HepG2 (cell line): ENCODE measurements at regions of chr9 and their contacts with region 1.

Region 1: GRCh38 chr9:21110708-21111576 is 30.7 kb downstream of the IFNW1 start:
- DNase-seq: peak; percentile 61
- ATAC-seq: peak; percentile 98
- H3K4me3 ChIP-seq: no peak overlapping the region
- H3K27ac ChIP-seq: no peak overlapping the region
- H3K4me1 ChIP-seq: no peaks in the 10 kb centered on the region
- H3K27me3 ChIP-seq: no peaks in the 10 kb centered on the region
- CTCF ChIP-seq: peak; percentile 85
- EP300 ChIP-seq: no peak
- POLR2A ChIP-seq: no peak
- RAD21 ChIP-seq: no peak

Region 2: GRCh38 chr9:19471737-19472648 is 1638.9 kb before region 1 on chr9:
- CTCF ChIA-PET with region 1: no interaction called
- POLR2A ChIA-PET with region 1: no interaction called
- in situ Hi-C with region 1: loop called (anchors 25 kb)
- intact Hi-C with region 1: loop called (anchors 5 kb)
- DNase-seq: peak; percentile 41
- ATAC-seq: peak; percentile 96
- H3K4me3 ChIP-seq: peak overlapping the region in 1 of 3 experiments; percentile 49; a peak in 2 of 6 replicates
- H3K27ac ChIP-seq: no peak overlapping the region
- H3K4me1 ChIP-seq: no peaks in the 10 kb centered on the region
- H3K27me3 ChIP-seq: peaks cover 0 to 8% of the 10 kb centered on the region in 2 experiments; a peak in 1 of 5 replicates
- CTCF ChIP-seq: peak; percentile 91
- EP300 ChIP-seq: no peak
- POLR2A ChIP-seq: no peak
- RAD21 ChIP-seq: peak; percentile 64

Region 3: GRCh38 chr9:19493174-19493811 is 1617.6 kb before region 1 on chr9:
- CTCF ChIA-PET with region 1: no interaction called
- POLR2A ChIA-PET with region 1: no interaction called
- in situ Hi-C with region 1: loop called (anchors 25 kb)
- intact Hi-C with region 1: loop called (anchors 5 kb)
- DNase-seq: peak; percentile 15
- ATAC-seq: peak; percentile 86
- H3K4me3 ChIP-seq: no peak overlapping the region
- H3K27ac ChIP-seq: no peak overlapping the region
- H3K4me1 ChIP-seq: no peaks in the 10 kb centered on the region
- H3K27me3 ChIP-seq: peaks cover 2 to 14% of the 10 kb centered on the region in 2 experiments; a peak in 2 of 5 replicates
- CTCF ChIP-seq: peak; percentile 82
- EP300 ChIP-seq: no peak
- POLR2A ChIP-seq: no peak
- RAD21 ChIP-seq: peak; percentile 58; the same call in 1 of the 2 replicates

Region 4: GRCh38 chr9:20356403-20357035 is 754.4 kb before region 1 on chr9:
- CTCF ChIA-PET with region 1: interaction called, 13 read pairs
- POLR2A ChIA-PET with region 1: no interaction called
- in situ Hi-C with region 1: loop called (anchors 25 kb)
- intact Hi-C with region 1: loop called (anchors 2 kb)
- DNase-seq: peak; percentile 64
- ATAC-seq: peak; percentile 96
- H3K4me3 ChIP-seq: no peak overlapping the region; a peak in 2 of 6 replicates
- H3K27ac ChIP-seq: peak overlapping the region; percentile 6
- H3K4me1 ChIP-seq: peaks cover 18% of the 10 kb centered on the region
- H3K27me3 ChIP-seq: no peaks in the 10 kb centered on the region
- CTCF ChIP-seq: peak; percentile 85
- EP300 ChIP-seq: no peak
- POLR2A ChIP-seq: no peak
- RAD21 ChIP-seq: peak; percentile 69

Region 5: DNA sequence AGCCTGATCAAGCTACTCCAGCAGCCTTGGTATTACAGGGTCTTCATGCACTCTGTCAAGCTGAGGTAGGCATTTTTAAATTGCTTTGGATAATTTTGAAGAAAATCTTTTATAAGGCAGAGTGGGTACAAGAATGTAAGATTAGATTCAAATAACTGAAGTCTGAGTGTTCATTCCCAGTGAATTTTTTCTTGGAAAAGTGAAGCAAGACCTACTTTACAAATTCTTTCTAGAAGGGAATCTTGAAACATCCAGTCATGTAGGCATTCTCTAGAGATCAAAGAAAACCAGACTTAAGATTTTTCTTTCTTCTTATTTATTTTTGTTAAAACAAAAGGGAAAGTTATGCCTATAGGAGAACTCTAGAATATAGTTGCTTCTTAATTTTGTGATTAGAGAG is 287.9 kb before region 1 on chr9:
- CTCF ChIA-PET with region 1: no interaction called
- POLR2A ChIA-PET with region 1: no interaction called
- in situ Hi-C with region 1: no loop called
- intact Hi-C with region 1: no loop called
- DNase-seq: no peak
- ATAC-seq: no peak
- H3K4me3 ChIP-seq: no peak overlapping the region
- H3K27ac ChIP-seq: no peak overlapping the region
- H3K4me1 ChIP-seq: no peaks in the 10 kb centered on the region
- H3K27me3 ChIP-seq: no peaks in the 10 kb centered on the region
- CTCF ChIP-seq: no peak
- EP300 ChIP-seq: no peak
- POLR2A ChIP-seq: no peak
- RAD21 ChIP-seq: no peak

Region 6: GRCh38 chr9:20884985-20885593 is 225.9 kb before region 1 on chr9:
- CTCF ChIA-PET with region 1: no interaction called
- POLR2A ChIA-PET with region 1: no interaction called
- in situ Hi-C with region 1: no loop called
- intact Hi-C with region 1: loop called (anchors 2 kb)
- DNase-seq: peak; percentile 44
- ATAC-seq: peak; percentile 69
- H3K4me3 ChIP-seq: no peak overlapping the region
- H3K27ac ChIP-seq: no peak overlapping the region
- H3K4me1 ChIP-seq: no peaks in the 10 kb centered on the region
- H3K27me3 ChIP-seq: no peaks in the 10 kb centered on the region
- CTCF ChIP-seq: peak; percentile 48
- EP300 ChIP-seq: no peak
- POLR2A ChIP-seq: no peak
- RAD21 ChIP-seq: no peak

Region 7: GRCh38 chr9:20941174-20941690 is 169.7 kb before region 1 on chr9:
- CTCF ChIA-PET with region 1: no interaction called
- POLR2A ChIA-PET with region 1: no interaction called
- in situ Hi-C with region 1: no loop called
- intact Hi-C with region 1: loop called (anchors 1 kb)
- DNase-seq: peak; percentile 63
- ATAC-seq: peak; percentile 100
- H3K4me3 ChIP-seq: no peak overlapping the region
- H3K27ac ChIP-seq: no peak overlapping the region
- H3K4me1 ChIP-seq: no peaks in the 10 kb centered on the region
- H3K27me3 ChIP-seq: no peaks in the 10 kb centered on the region
- CTCF ChIP-seq: peak; percentile 94
- EP300 ChIP-seq: no peak
- POLR2A ChIP-seq: no peak
- RAD21 ChIP-seq: peak; percentile 83

Region 8: GRCh38 chr9:21154018-21154608 is 43.2 kb after region 1 on chr9:
- CTCF ChIA-PET with region 1: no interaction called
- POLR2A ChIA-PET with region 1: no interaction called
- in situ Hi-C with region 1: no loop called
- intact Hi-C with region 1: no loop called
- DNase-seq: no peak
- ATAC-seq: peak; percentile 74
- H3K4me3 ChIP-seq: no peak overlapping the region
- H3K27ac ChIP-seq: no peak overlapping the region
- H3K4me1 ChIP-seq: no peaks in the 10 kb centered on the region
- H3K27me3 ChIP-seq: no peaks in the 10 kb centered on the region
- CTCF ChIP-seq: peak; percentile 19; the same call in 1 of the 2 replicates
- EP300 ChIP-seq: no peak
- POLR2A ChIP-seq: no peak
- RAD21 ChIP-seq: no peak